ENCODE measurements at regions of chr1 and their contacts with region 1.

Region 1: GRCh38 chr1:44217809-44218410 is 4.6 kb downstream of the DMAP1 start:
- DNase-seq: peak; percentile 38
- ATAC-seq: peak; percentile 78
- H3K4me3 ChIP-seq: no peak overlapping the region
- H3K27ac ChIP-seq: no peak overlapping the region
- H3K4me1 ChIP-seq: peaks cover 6 to 16% of the 10 kb centered on the region in 2 experiments; a peak in 3 of 4 replicates
- H3K27me3 ChIP-seq: no peaks in the 10 kb centered on the region
- CTCF ChIP-seq: peak; percentile 72 to 96 (median 94)
- POLR2A ChIP-seq: no peak
- RAD21 ChIP-seq: peak; percentile 86

Region 2: DNA sequence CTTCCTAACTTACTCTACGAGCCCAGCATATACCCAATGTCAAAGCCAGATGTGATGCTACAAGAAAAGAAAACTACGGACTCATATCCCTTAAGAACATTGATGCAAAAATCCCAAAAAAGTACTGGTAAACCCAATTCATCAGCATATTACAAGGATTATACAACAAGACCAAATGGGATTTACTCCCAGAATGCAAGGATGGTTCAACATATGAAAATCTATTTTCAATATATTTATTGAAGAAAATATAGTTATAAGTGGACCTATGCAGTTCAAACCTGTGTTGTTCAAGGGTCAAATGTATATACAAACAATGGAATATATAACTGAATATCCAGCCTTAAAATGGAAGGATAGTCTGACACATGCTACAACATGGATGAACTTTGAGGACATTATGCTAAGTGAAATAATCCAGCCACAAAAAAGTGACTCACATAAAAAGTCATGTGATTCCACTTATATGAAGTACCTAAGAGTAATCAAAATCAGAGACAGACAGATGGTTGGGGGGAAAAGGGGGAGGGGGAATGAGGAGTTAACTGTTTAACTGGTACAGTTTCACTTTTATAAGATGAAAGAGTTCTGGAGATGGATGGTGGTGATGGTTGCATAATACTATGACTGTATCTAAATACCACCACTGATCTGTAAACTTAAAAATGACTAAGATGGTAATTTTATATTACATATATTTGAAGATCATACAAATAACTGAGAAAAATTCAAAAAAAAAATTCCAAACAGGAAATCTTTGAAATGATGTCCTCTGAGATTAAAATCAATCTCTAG is 72.8 kb before region 1 on chr1:
- CTCF ChIA-PET with region 1: no interaction called
- POLR2A ChIA-PET with region 1: no interaction called
- RAD21 ChIA-PET with region 1: no interaction called
- intact Hi-C with region 1: no loop called
- DNase-seq: no peak
- ATAC-seq: no peak
- H3K4me3 ChIP-seq: no peak overlapping the region
- H3K27ac ChIP-seq: no peak overlapping the region
- H3K4me1 ChIP-seq: 0 out of 4 replicates have a peak, but pooled peaks cover 0 to 3% of the 10 kb centered on the region in 2 experiments
- H3K27me3 ChIP-seq: no peaks in the 10 kb centered on the region
- CTCF ChIP-seq: no peak
- POLR2A ChIP-seq: no peak
- RAD21 ChIP-seq: no peak

Region 3: DNA sequence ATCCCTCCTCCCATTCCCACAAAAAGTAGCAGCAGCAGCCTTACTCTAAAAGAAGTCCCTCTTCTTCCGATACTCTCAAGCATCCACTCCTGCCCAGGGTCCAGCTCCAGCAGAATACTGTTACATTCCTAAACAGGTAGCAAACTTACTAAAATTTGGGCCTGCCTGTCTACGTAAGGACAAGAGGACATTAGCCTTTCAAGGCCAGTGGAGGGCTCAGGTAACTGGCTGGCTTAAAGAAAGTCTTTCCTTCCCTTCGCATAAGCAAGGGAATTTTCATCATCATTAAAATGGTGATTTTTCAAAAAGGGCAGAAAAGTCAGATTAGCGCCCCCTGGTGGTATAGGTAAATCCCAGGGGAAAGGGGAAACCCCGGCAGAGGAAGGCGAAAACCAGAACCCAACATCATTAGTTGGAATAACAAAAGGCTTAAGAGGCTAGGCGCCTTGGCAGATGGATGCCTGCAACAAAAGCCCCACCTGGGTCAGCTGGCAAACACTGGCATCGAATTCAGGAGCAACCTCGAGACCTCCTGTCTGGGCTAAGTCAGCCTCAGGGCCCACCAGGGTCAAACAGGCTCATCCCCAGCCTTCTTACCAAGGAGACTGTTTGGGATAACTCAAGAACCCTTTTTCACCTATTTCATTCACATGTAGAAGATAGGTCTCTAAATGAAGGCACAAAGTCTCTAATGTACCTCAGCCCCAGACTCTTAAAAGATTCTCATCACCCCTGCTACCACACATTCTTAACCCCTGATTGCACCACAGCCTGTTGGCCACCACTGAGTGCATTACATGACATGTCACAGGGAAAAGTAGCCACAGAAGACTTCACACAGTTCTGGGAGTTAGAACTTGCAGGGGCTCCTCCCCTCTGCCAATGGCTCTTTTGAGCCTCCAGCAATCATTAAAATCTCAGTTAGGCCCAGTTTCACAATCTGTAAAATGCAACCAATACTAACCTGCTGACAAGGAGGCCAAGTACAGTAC is 100.5 kb after region 1 on chr1:
- CTCF ChIA-PET with region 1: interaction called, 4 read pairs
- POLR2A ChIA-PET with region 1: no interaction called
- RAD21 ChIA-PET with region 1: no interaction called
- intact Hi-C with region 1: loop called (anchors 1 kb)
- DNase-seq: no peak
- ATAC-seq: peak; percentile 63
- H3K4me3 ChIP-seq: no peak overlapping the region
- H3K27ac ChIP-seq: no peak overlapping the region
- H3K4me1 ChIP-seq: no peaks in the 10 kb centered on the region; a peak in 1 of 4 replicates
- H3K27me3 ChIP-seq: no peaks in the 10 kb centered on the region
- CTCF ChIP-seq: peak; percentile 54 to 92 (median 79); a peak in 5 of 6 replicates
- POLR2A ChIP-seq: no peak
- RAD21 ChIP-seq: peak; percentile 49